ENCODE measurements at regions of chr6 and their contacts with region 1.

Region 1: GRCh38 chr6:119333707-119334295 is 15.8 kb downstream of the MAN1A1 start:
- DNase-seq: no peak
- H3K4me3 Mint-ChIP-seq: no peak overlapping the region
- H3K27ac Mint-ChIP-seq: no peak overlapping the region
- H3K4me1 Mint-ChIP-seq: peaks cover 19% of the 10 kb centered on the region
- H3K27me3 Mint-ChIP-seq: no peaks in the 10 kb centered on the region

Region 2: DNA sequence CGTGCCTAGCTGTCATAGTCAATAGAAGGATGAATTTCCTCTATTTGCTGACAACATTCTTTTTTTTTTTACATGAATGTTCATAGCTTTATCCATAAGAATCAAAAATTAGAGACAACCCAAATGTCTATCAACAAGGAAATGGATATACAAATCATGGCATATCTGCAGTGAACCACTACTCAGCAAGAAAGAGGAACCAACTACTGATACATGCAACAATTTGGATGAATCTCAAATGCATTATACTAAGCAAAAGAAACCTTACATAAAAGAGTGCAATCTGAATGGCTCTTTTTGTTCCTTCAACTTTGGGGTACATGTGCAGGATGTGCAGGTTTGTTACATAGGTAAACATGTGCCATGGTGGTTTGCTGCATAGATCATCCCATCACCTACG is 381.1 kb before region 1 on chr6:
- CTCF ChIA-PET with region 1: no interaction called
- intact Hi-C with region 1: no loop called
- DNase-seq: no peak
- H3K4me3 Mint-ChIP-seq: no peak overlapping the region
- H3K27ac Mint-ChIP-seq: no peak overlapping the region
- H3K4me1 Mint-ChIP-seq: no peaks in the 10 kb centered on the region
- H3K27me3 Mint-ChIP-seq: no peaks in the 10 kb centered on the region

Region 3: GRCh38 chr6:119476554-119476953 is 142.8 kb after region 1 on chr6:
- CTCF ChIA-PET with region 1: no interaction called
- intact Hi-C with region 1: no loop called
- DNase-seq: no peak
- H3K4me3 Mint-ChIP-seq: no peak overlapping the region
- H3K27ac Mint-ChIP-seq: no peak overlapping the region
- H3K4me1 Mint-ChIP-seq: no peaks in the 10 kb centered on the region
- H3K27me3 Mint-ChIP-seq: no peaks in the 10 kb centered on the region

Region 4: GRCh38 chr6:119978274-119978889 is 644.6 kb after region 1 on chr6:
- CTCF ChIA-PET with region 1: interaction called, 3 read pairs
- intact Hi-C with region 1: loop called (anchors 5 kb)
- DNase-seq: peak; percentile 16
- H3K4me3 Mint-ChIP-seq: no peak overlapping the region
- H3K27ac Mint-ChIP-seq: no peak overlapping the region
- H3K4me1 Mint-ChIP-seq: no peaks in the 10 kb centered on the region
- H3K27me3 Mint-ChIP-seq: no peaks in the 10 kb centered on the region

Measured in activated naive CD4-positive, alpha-beta T cell treated with anti-CD3 and anti-CD28 coated beads for 36 hours (primary cell).